ENCODE measurements at regions of chr1 and their contacts with region 1.

Region 1: DNA sequence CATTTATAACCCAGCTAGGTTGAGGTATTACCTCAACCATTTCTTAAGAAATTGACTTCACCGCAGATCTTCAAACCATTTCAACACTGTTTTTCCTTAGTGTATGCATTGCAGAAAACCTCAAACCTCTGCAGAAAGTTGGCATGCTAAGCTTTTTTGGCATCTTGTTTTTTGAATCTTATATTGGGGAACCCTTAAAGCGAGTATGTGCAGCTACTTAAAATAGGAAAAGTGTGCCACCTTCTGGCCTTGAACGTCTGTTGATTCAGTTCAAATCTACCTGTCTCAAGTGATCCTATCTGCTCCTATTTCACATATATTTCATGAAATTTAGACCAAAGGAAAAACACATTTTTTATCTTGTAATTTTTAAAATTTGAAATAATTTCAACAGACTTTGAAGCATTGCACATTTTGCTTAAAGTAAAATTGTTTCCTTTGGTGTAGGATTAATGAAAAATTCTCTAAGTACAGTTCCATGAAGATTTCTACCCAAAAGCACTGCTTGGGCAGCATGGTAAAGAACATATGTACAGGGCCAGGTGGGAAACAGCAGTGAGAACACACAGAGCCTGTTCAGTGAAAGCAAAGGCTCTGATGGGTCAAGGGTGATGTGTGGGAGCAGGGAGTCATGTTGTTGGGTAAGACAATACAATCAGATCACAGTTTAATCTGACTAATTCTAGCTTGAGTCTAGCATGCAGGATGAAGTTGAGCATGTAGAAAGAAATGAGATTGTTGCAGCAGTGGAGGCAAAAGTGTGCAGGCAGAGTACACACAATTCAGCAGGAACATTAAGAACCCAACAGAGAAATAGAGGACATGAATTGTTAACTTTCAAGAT is 17.2 kb downstream of the HENMT1 start:
- DNase-seq: peak; percentile 57

Region 2: GRCh38 chr1:108512239-108512981 is 131.3 kb before region 1 on chr1:
- CTCF ChIA-PET with region 1: interaction called, 23 read pairs
- POLR2A ChIA-PET with region 1: no interaction called
- DNase-seq: peak; percentile 40

Region 3: GRCh38 chr1:108657356-108658080 is 13.8 kb after region 1 on chr1:
- CTCF ChIA-PET with region 1: no interaction called
- POLR2A ChIA-PET with region 1: no interaction called
- DNase-seq: no peak

Measured in HEK293T (cell line).